ENCODE measurements at regions of chr7 and their contacts with region 1.

Region 1: DNA sequence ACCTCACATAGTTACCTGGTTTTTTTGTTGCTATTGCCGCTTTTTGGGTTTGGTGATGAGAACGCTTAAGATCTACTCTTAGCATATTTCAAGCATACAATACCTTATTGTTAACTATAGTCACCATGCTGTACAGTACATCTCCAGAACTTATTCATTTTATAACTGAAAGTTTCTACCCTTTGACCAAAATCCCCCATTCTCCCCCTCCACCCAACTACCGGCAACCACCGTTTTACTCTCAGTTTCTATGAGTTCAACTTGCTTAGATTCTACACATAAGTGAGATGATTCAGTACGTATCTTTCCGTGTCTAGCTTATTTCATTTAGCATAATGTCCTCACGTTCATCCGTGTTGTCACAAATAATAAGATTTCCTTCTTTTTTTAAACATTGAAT is 86.7 kb upstream of the IL6 start:
- DNase-seq: peak; percentile 69
- ATAC-seq: peak; percentile 97
- H3K4me3 Mint-ChIP-seq: no peak overlapping the region
- H3K27ac Mint-ChIP-seq: no peak overlapping the region
- H3K4me1 Mint-ChIP-seq: peaks cover 22% of the 10 kb centered on the region
- H3K27me3 Mint-ChIP-seq: peaks cover 31% of the 10 kb centered on the region

Region 2: GRCh38 chr7:22565315-22565811 is 74.9 kb before region 1 on chr7:
- CTCF ChIA-PET with region 1: interaction called, 8 read pairs
- POLR2A ChIA-PET with region 1: no interaction called
- intact Hi-C with region 1: loop called (anchors 2 kb)
- DNase-seq: no peak
- ATAC-seq: no peak
- H3K4me3 Mint-ChIP-seq: no peak overlapping the region
- H3K27ac Mint-ChIP-seq: no peak overlapping the region
- H3K4me1 Mint-ChIP-seq: peaks cover 49% of the 10 kb centered on the region
- H3K27me3 Mint-ChIP-seq: peaks cover 54% of the 10 kb centered on the region

Region 3: GRCh38 chr7:22586786-22587140 is 53.5 kb before region 1 on chr7:
- CTCF ChIA-PET with region 1: interaction called, 3 read pairs
- POLR2A ChIA-PET with region 1: no interaction called
- intact Hi-C with region 1: loop called (anchors 1 kb)
- DNase-seq: no peak
- ATAC-seq: peak; percentile 42
- H3K4me3 Mint-ChIP-seq: no peak overlapping the region
- H3K27ac Mint-ChIP-seq: no peak overlapping the region
- H3K4me1 Mint-ChIP-seq: peaks cover 15% of the 10 kb centered on the region
- H3K27me3 Mint-ChIP-seq: peaks cover 26% of the 10 kb centered on the region

Region 4: DNA sequence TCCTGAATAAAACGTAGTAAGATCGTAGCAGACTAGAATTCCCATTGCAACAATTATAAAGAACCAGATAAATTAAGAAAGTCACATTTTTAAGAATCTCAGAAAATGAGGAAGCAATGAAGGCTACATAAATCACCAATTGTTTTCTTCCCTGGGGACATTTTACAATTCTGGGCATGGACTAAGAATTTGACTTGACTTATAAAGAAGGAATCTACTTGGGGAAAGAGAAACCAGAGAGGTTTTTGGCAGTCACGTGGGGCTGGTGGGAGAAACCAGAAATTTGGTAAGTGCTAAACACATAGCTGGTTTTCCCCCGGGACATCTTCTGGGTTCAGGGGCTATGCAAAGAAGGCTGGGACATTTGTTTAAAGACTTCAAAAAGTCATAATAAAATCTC is 23.1 kb before region 1 on chr7:
- CTCF ChIA-PET with region 1: no interaction called
- POLR2A ChIA-PET with region 1: no interaction called
- intact Hi-C with region 1: no loop called
- DNase-seq: no peak
- ATAC-seq: no peak
- H3K4me3 Mint-ChIP-seq: no peak overlapping the region
- H3K27ac Mint-ChIP-seq: no peak overlapping the region
- H3K4me1 Mint-ChIP-seq: peaks cover 2% of the 10 kb centered on the region
- H3K27me3 Mint-ChIP-seq: peaks cover 26% of the 10 kb centered on the region

Region 5: DNA sequence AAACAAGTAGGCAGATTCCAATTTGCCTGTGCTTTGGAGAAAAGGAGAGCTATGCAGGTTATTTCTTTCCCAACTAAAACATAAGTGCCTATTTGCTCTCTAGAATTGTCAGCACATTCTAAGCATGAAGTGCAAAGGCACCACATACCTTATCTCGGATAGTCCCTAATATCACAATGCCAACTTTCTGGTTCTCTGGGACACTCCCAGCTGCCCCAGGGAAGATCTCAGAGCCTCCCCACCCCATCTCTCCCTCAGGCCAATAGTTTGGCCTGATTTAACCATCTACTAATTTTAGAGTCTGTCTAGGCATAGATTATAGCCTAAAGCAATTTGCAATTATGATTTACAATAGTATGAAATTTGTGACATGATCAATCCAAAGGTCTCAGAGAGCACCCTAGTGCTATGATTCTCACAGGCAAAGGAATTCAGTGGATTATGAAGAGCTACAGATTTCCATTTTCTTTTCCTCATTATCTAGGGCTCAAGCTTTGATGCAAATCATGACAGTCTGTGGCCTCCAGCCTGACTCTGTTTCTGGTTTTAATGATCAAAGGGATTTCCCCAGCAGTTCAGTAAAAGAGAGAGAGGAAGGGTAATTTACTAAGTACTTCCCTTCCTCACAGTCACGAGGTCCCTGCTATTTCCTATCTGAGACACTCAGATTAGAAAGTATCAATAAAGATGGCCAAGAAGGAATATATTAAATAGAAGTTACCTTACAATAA is 57.8 kb after region 1 on chr7:
- CTCF ChIA-PET with region 1: no interaction called
- POLR2A ChIA-PET with region 1: no interaction called
- intact Hi-C with region 1: loop called (anchors 1 to 2 kb)
- DNase-seq: peak; percentile 42
- ATAC-seq: peak; percentile 72
- H3K4me3 Mint-ChIP-seq: no peak overlapping the region
- H3K27ac Mint-ChIP-seq: peak overlapping the region; percentile 86
- H3K4me1 Mint-ChIP-seq: peaks cover 63% of the 10 kb centered on the region
- H3K27me3 Mint-ChIP-seq: peaks cover 3% of the 10 kb centered on the region

Region 6: DNA sequence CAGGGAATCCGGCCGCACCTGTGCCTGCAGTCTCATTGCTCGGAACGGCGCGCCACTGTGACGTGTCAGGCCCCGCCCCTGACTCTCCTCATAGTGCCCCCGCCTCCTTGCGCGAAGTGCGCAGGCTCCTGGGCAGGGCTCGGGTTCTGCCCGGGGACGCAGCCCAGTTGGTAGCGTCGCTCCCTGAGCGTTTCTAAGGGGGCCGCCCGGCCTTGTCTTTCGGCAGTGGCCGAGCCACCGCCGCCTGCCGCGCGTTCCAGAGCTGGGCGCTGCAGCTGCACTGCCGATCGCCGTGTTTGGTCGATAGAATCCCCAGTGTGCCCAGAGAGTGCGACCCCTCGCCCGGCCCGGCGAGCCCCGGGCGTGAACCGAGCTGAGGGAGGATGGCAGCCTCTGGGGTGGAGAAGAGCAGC is 465.4 kb after region 1 on chr7 and contains the start of gene KLHL7:
- CTCF ChIA-PET with region 1: no interaction called
- POLR2A ChIA-PET with region 1: no interaction called
- intact Hi-C with region 1: no loop called
- DNase-seq: peak; percentile 98
- ATAC-seq: peak; percentile 98
- H3K4me3 Mint-ChIP-seq: peak within 1 kb of the TSS; percentile 97
- H3K27ac Mint-ChIP-seq: peak within 1 kb of the TSS; percentile 94
- H3K4me1 Mint-ChIP-seq: peaks cover 32% of the 10 kb centered on the region
- H3K27me3 Mint-ChIP-seq: no peaks in the 10 kb centered on the region
- total RNA-seq, gene KLHL7: 18.1 to 20.8 TPM